GM12878 (cell line): ENCODE measurements at regions of chr1 and their contacts with region 1.

Region 1: DNA sequence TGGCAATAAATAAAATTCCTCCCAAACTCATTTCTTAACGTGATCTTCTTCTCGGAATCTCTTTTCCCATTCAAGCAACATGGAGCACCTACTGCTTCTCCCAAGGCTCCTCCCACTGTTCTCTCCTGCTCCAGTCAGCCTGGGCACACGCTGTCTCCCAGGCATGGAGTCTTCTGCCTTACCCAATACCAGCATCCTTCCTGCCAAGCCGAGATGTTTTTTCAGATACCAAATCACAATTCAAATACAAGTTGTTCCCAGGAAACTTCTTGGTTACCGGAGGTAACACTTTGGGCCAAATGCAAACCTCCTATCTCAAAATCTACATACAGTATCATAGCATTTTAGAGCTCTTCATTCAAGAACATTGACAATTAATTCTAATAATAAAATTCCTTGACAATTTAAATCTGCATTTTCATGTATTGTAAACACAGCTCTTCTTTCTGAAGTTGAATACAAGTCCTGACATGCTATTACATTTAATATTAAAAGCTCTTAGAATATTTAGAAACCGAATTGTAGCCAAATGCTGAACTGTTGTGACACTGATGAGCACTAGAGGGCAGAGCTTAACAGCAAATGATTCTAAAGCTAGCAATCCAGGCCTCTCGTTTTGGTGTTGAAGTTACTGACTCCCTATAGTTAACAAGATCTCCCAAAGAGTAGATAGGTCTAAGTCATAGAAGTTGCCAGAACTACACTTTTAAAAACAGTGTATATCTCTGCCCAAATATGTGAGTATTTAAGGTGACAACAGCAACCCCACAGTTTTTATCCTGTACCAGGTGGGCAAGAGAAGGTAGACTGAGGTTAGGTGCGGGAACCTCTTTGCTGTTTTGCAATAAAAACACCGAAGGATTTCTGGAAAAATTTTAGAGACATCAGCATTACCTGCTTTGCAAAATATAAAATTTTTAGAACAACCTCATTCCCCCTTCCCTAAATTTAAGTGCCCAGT is 52.3 kb downstream of the BCAR3 start:
- DNase-seq: peak; percentile 28
- ATAC-seq: peak; percentile 89
- H3K4me3 ChIP-seq: no peak overlapping the region
- H3K27ac ChIP-seq: no peak overlapping the region
- H3K4me1 ChIP-seq: no peaks in the 10 kb centered on the region
- H3K27me3 ChIP-seq: no peaks in the 10 kb centered on the region
- CTCF ChIP-seq: peak; percentile 64 to 89 (median 73)
- EP300 ChIP-seq: no peak
- POLR2A ChIP-seq: no peak
- RAD21 ChIP-seq: peak; percentile 100

Region 2: DNA sequence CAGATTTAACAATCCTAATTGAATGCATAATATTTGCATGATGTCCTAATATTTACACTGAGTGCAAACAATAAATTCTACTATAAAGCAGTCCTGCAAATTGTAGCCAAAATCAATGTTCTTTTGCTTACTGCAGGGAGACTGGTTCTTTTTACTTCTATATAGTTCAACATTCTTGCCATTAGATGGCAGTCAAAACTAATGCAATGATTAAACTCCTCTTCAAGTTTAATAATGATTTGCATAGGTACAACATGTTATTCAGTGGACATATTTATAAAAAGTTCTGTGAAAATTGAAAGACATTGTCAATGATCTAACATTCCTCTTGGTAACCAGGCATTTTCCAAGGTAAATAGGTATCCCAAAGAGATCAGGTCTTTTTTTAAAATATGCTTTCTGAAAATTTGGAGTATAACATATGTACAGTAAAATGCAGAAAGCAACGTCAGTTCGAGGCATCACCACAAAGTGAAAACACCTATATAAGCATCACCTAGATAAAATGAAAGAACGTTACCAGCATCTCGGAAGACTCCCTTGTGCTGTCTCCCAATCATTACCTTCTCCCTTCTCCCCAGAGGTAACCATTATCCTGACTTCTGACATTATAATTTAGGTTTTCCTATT is 191.3 kb before region 1 on chr1:
- CTCF ChIA-PET with region 1: interaction called, 15 read pairs
- POLR2A ChIA-PET with region 1: no interaction called
- RAD21 ChIA-PET with region 1: interaction called, 3 read pairs
- SMC1A ChIA-PET with region 1: interaction called, 5 read pairs
- in situ Hi-C with region 1: no loop called
- intact Hi-C with region 1: no loop called
- DNase-seq: no peak
- ATAC-seq: peak; percentile 74
- H3K4me3 ChIP-seq: no peak overlapping the region
- H3K27ac ChIP-seq: no peak overlapping the region
- H3K4me1 ChIP-seq: no peaks in the 10 kb centered on the region
- H3K27me3 ChIP-seq: peaks cover 0 to 2% of the 10 kb centered on the region in 2 experiments; a peak in 2 of 4 replicates
- CTCF ChIP-seq: peak; percentile 30 to 61 (median 46); a peak in 5 of 6 replicates
- EP300 ChIP-seq: no peak
- POLR2A ChIP-seq: no peak
- RAD21 ChIP-seq: peak; percentile 76

Region 3: GRCh38 chr1:93552741-93553455 is 76.5 kb before region 1 on chr1:
- CTCF ChIA-PET with region 1: no interaction called
- POLR2A ChIA-PET with region 1: no interaction called
- RAD21 ChIA-PET with region 1: no interaction called
- SMC1A ChIA-PET with region 1: no interaction called
- in situ Hi-C with region 1: no loop called
- intact Hi-C with region 1: no loop called
- DNase-seq: no peak
- ATAC-seq: no peak
- H3K4me3 ChIP-seq: no peak overlapping the region
- H3K27ac ChIP-seq: no peak overlapping the region
- H3K4me1 ChIP-seq: no peaks in the 10 kb centered on the region
- H3K27me3 ChIP-seq: no peaks in the 10 kb centered on the region; a peak in 3 of 4 replicates
- CTCF ChIP-seq: no peak
- EP300 ChIP-seq: no peak
- POLR2A ChIP-seq: no peak
- RAD21 ChIP-seq: no peak

Region 4: GRCh38 chr1:93649231-93649630 is 19.9 kb after region 1 on chr1:
- CTCF ChIA-PET with region 1: interaction called, 16 read pairs
- POLR2A ChIA-PET with region 1: interaction called, 4 read pairs
- RAD21 ChIA-PET with region 1: interaction called, 10 read pairs
- SMC1A ChIA-PET with region 1: interaction called, 7 read pairs
- in situ Hi-C with region 1: no loop called
- intact Hi-C with region 1: no loop called
- DNase-seq: no peak
- ATAC-seq: no peak
- H3K4me3 ChIP-seq: no peak overlapping the region
- H3K27ac ChIP-seq: no peak overlapping the region
- H3K4me1 ChIP-seq: no peaks in the 10 kb centered on the region
- H3K27me3 ChIP-seq: no peaks in the 10 kb centered on the region; a peak in 1 of 4 replicates
- CTCF ChIP-seq: no peak
- EP300 ChIP-seq: no peak
- POLR2A ChIP-seq: no peak
- RAD21 ChIP-seq: no peak

Region 5: DNA sequence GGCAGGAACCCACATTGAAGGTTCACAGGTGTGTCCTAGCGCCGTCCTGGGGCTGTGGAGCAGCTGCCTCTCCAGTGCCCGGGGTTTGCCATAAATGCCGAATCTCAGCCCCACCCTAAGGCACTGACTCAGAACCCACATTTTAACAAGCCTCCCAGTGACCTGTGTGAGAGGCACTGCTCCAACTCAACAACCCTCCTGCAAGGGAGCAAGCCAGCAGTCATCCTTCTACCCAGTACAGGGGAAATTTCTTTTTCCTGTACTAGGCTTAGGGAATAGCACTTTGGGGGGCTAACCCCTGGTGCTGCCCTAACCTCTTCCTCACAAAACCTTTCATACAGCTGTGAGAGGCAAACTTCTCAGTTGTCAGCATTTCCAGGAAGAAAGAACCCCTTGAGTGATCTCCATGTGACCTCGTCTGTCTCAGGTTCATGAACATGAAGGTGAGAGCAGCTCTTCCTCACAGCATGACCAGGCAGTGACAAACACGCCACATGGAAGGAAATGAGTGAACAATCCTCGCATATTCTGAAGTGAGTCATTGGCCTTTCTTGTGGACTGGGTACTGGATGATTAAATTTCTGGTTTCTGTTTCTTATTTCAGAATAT is 63.7 kb after region 1 on chr1:
- CTCF ChIA-PET with region 1: interaction called, 5 read pairs
- POLR2A ChIA-PET with region 1: no interaction called
- RAD21 ChIA-PET with region 1: interaction called, 8 read pairs
- SMC1A ChIA-PET with region 1: interaction called, 37 read pairs
- in situ Hi-C with region 1: no loop called
- intact Hi-C with region 1: no loop called
- DNase-seq: peak; percentile 63
- ATAC-seq: peak; percentile 88
- H3K4me3 ChIP-seq: no peak overlapping the region
- H3K27ac ChIP-seq: peak overlapping the region; percentile 30
- H3K4me1 ChIP-seq: peaks cover 44% of the 10 kb centered on the region
- H3K27me3 ChIP-seq: no peaks in the 10 kb centered on the region
- CTCF ChIP-seq: no peak
- EP300 ChIP-seq: peak in 1 of 2 experiments; percentile 14; a peak in 1 of 4 replicates
- POLR2A ChIP-seq: no peak
- RAD21 ChIP-seq: no peak

Region 6: GRCh38 chr1:93734999-93735398 is 105.6 kb after region 1 on chr1:
- CTCF ChIA-PET with region 1: interaction called, 65 read pairs
- POLR2A ChIA-PET with region 1: no interaction called
- RAD21 ChIA-PET with region 1: interaction called, 9 read pairs
- SMC1A ChIA-PET with region 1: interaction called, 21 read pairs
- in situ Hi-C with region 1: no loop called
- intact Hi-C with region 1: loop called (anchors 5 kb)
- DNase-seq: no peak
- ATAC-seq: peak; percentile 70
- H3K4me3 ChIP-seq: no peak overlapping the region
- H3K27ac ChIP-seq: no peak overlapping the region
- H3K4me1 ChIP-seq: peaks cover 11% of the 10 kb centered on the region
- H3K27me3 ChIP-seq: no peaks in the 10 kb centered on the region
- CTCF ChIP-seq: peak; percentile 28 to 52 (median 39)
- EP300 ChIP-seq: no peak
- POLR2A ChIP-seq: no peak
- RAD21 ChIP-seq: peak; percentile 39

Region 7: DNA sequence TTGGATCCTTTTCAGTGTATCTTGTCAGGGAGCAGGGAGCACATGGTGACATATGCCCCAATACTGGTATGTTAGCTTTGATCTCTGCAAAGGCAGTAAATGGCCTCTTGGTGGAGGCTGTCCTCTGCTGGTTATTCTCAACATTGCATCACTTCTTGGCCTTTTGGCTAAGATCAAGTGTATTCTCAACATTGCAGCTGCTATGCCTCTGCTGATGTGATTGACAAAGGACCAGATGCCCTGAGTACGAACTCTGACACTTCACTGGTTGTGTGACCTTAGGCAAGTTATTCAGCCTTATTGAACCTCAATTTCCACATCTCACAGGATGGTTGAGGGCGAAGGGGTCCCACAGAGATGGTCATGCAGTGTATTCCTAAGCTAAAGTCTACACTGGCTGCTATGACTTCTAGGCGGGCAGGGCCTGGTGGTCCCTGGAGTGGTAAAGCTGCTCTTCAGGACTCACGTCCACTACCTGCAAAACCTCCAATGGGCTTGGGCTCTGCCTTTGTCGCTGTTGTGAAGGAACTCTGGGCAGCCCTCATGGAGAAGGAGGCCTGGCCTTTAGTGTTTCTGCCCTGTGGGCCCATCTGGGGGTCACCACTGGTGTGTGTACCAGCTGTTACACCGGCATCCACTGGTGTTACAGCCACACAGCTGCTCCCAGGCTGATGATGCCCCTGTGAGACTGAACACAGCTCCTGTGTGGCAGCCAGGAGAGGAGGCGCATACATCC is 184.8 kb after region 1 on chr1:
- CTCF ChIA-PET with region 1: interaction called, 555 read pairs
- POLR2A ChIA-PET with region 1: interaction called, 14 read pairs
- RAD21 ChIA-PET with region 1: interaction called, 483 read pairs
- SMC1A ChIA-PET with region 1: interaction called, 505 read pairs
- in situ Hi-C with region 1: loop called (anchors 5 kb)
- intact Hi-C with region 1: loop called (anchors 1 kb)
- DNase-seq: peak; percentile 40
- ATAC-seq: peak; percentile 92
- H3K4me3 ChIP-seq: no peak overlapping the region
- H3K27ac ChIP-seq: no peak overlapping the region
- H3K4me1 ChIP-seq: peaks cover 8% of the 10 kb centered on the region
- H3K27me3 ChIP-seq: no peaks in the 10 kb centered on the region; a peak in 1 of 4 replicates
- CTCF ChIP-seq: peak; percentile 97 to 99 (median 97); a peak in 5 of 6 replicates
- EP300 ChIP-seq: no peak
- POLR2A ChIP-seq: no peak
- RAD21 ChIP-seq: peak; percentile 100

Region 8: DNA sequence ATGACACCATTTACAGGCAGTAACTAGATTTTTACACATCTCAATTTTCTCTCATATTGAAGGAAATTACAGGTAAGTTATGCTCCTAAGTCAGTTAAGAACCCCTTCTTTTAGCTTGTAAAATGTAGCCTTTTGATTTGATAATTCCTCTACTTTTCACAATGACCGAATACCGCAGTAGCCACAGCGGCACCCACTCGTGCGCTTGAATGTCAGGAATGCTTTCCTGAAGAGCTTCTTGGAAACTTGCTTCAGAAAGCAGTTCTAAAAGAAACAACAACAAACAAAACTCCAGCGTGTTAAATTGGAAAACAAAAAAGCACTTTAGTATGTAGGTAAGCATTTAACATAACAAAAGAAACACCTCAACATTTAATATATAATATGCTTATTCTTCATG is 259.5 kb after region 1 on chr1:
- CTCF ChIA-PET with region 1: no interaction called
- POLR2A ChIA-PET with region 1: no interaction called
- RAD21 ChIA-PET with region 1: no interaction called
- SMC1A ChIA-PET with region 1: no interaction called
- in situ Hi-C with region 1: no loop called
- intact Hi-C with region 1: no loop called
- DNase-seq: no peak
- ATAC-seq: no peak
- H3K4me3 ChIP-seq: no peak overlapping the region
- H3K27ac ChIP-seq: no peak overlapping the region
- H3K4me1 ChIP-seq: no peaks in the 10 kb centered on the region
- H3K27me3 ChIP-seq: no peaks in the 10 kb centered on the region
- CTCF ChIP-seq: no peak
- EP300 ChIP-seq: no peak
- POLR2A ChIP-seq: no peak
- RAD21 ChIP-seq: no peak

Region 9: GRCh38 chr1:94068999-94069918 is 439.9 kb after region 1 on chr1:
- CTCF ChIA-PET with region 1: no interaction called
- POLR2A ChIA-PET with region 1: no interaction called
- RAD21 ChIA-PET with region 1: no interaction called
- SMC1A ChIA-PET with region 1: no interaction called
- in situ Hi-C with region 1: no loop called
- intact Hi-C with region 1: no loop called
- DNase-seq: no peak
- ATAC-seq: no peak
- H3K4me3 ChIP-seq: no peak overlapping the region
- H3K27ac ChIP-seq: no peak overlapping the region
- H3K4me1 ChIP-seq: no peaks in the 10 kb centered on the region
- H3K27me3 ChIP-seq: no peaks in the 10 kb centered on the region
- CTCF ChIP-seq: no peak
- EP300 ChIP-seq: no peak
- POLR2A ChIP-seq: no peak
- RAD21 ChIP-seq: no peak

Region 10: GRCh38 chr1:94936861-94937620 is 1307.7 kb after region 1 on chr1:
- CTCF ChIA-PET with region 1: no interaction called
- POLR2A ChIA-PET with region 1: no interaction called
- RAD21 ChIA-PET with region 1: no interaction called
- SMC1A ChIA-PET with region 1: no interaction called
- in situ Hi-C with region 1: no loop called
- intact Hi-C with region 1: no loop called
- DNase-seq: no peak
- ATAC-seq: no peak
- H3K4me3 ChIP-seq: no peak overlapping the region
- H3K27ac ChIP-seq: no peak overlapping the region
- H3K4me1 ChIP-seq: no peaks in the 10 kb centered on the region
- H3K27me3 ChIP-seq: no peaks in the 10 kb centered on the region; a peak in 1 of 4 replicates
- CTCF ChIP-seq: no peak
- EP300 ChIP-seq: no peak
- POLR2A ChIP-seq: no peak
- RAD21 ChIP-seq: no peak